Esophagus muscularis mucosa (tissue), 4 donors: ENCODE measurements at regions of chr3 and their contacts with region 1.

Region 1: GRCh38 chr3:130759699-130760338 is 13.2 kb upstream of the PIK3R4 start:
- DNase-seq: no peak
- H3K4me3 ChIP-seq: no peak overlapping the region
- H3K27ac ChIP-seq: no peak overlapping the region
- H3K4me1 ChIP-seq: peaks cover 0 to 4% (median 2%) of the 10 kb centered on the region in 4 donors
- H3K27me3 ChIP-seq: peaks cover 0 to 15% (median 0%) of the 10 kb centered on the region in 4 donors
- CTCF ChIP-seq: peak; percentile 64 to 79 (median 74)
- EP300 ChIP-seq: no peak
- POLR2A ChIP-seq: no peak

Region 2: DNA sequence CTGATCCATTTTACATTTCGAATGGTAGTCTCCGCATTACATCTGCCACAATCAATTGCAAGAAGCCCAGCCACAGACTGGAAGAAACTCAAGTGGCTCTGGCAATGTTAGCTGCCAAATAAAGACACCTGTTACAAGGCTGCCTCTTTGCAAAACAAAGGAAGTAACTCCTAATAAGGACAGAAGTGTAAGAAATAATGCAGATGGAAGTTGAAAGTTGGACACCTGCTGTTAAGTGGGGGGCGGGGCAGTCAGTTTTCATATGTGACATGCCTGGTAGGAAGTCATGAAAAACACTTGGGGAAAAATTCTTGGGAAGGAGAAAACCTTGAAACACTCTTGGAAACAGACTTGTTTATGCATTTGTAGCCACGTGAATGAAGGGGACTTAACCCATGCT is 80.0 kb after region 1 on chr3:
- intact Hi-C with region 1: loop called (anchors 10 kb)
- DNase-seq: no peak
- H3K4me3 ChIP-seq: no peak overlapping the region
- H3K27ac ChIP-seq: peak overlapping the region in 3 of 4 donors; percentile 17 to 34 (median 25)
- H3K4me1 ChIP-seq: peaks cover 20 to 29% (median 25%) of the 10 kb centered on the region in 4 donors
- H3K27me3 ChIP-seq: no peaks in the 10 kb centered on the region
- CTCF ChIP-seq: no peak
- EP300 ChIP-seq: no peak
- POLR2A ChIP-seq: no peak

Region 3: GRCh38 chr3:130892759-130893375 is 133.0 kb after region 1 on chr3:
- intact Hi-C with region 1: loop called (anchors 2 kb)
- DNase-seq: no peak
- H3K4me3 ChIP-seq: peak overlapping the region; percentile 78 to 94 (median 90)
- H3K27ac ChIP-seq: peak overlapping the region; percentile 94 to 98 (median 96)
- H3K4me1 ChIP-seq: peaks cover 13 to 34% (median 32%) of the 10 kb centered on the region in 4 donors
- H3K27me3 ChIP-seq: no peaks in the 10 kb centered on the region
- CTCF ChIP-seq: peak; percentile 86 to 89 (median 86)
- EP300 ChIP-seq: no peak
- POLR2A ChIP-seq: no peak